ENCODE measurements at regions of chr15 and their contacts with region 1.

Region 1: GRCh38 chr15:91852741-91853510 is 582 bp upstream of the SLCO3A1 start:
- DNase-seq: peak; percentile 77
- H3K4me3 Mint-ChIP-seq: peak overlapping the region; percentile 83
- H3K27ac Mint-ChIP-seq: peak overlapping the region; percentile 87
- H3K4me1 Mint-ChIP-seq: peaks cover 59% of the 10 kb centered on the region
- H3K27me3 Mint-ChIP-seq: no peaks in the 10 kb centered on the region

Region 2: GRCh38 chr15:91867581-91868026 is 14.7 kb after region 1 on chr15:
- CTCF ChIA-PET with region 1: interaction called, 11 read pairs
- POLR2A ChIA-PET with region 1: interaction called, 47 read pairs
- DNase-seq: no peak
- H3K4me3 Mint-ChIP-seq: no peak overlapping the region
- H3K27ac Mint-ChIP-seq: no peak overlapping the region
- H3K4me1 Mint-ChIP-seq: peaks cover 75% of the 10 kb centered on the region
- H3K27me3 Mint-ChIP-seq: no peaks in the 10 kb centered on the region

Region 3: DNA sequence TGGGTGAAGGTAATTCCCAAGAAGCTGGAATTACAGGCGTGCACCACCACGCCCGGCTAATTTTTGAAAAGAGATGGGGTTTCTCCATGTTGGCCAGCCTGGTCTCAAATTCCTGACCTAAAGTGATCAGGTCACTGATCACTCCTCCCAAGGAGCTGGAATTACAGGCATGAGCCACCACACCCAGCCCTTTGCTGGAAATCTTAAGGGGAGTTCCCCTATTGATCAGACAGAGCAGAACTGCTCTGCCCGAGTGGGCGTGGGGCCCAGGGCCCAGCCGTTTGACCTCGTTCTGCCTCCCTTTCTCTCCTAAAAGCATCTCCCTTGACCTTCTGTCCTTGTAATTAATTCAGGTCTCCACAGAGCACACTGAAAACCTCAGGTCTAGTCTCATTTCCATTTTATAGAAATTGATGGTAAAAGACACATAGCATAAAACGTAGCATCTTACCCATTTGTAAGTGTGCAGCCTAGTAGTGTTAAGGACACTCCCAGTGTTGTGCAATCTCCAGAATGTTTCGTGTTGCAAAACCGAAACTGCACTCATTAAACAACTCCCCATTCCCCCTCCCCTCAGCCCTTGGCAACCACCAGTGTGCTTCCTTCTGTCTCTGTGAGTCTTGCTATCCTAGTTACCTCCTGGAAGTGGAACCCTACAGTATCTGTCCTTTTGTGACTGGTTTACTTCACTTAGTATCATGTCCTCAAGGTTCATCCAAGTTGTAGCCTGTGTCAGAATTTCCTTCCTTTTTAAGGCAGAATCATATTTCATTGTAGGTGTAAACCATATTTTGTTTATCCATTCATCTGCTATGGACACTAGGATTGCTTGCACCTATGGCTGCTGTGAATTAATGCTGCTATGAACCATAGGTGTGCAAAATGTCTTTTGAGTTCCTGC is 90.0 kb after region 1 on chr15:
- CTCF ChIA-PET with region 1: interaction called, 27 read pairs
- POLR2A ChIA-PET with region 1: interaction called, 3 read pairs
- DNase-seq: peak; percentile 63
- H3K4me3 Mint-ChIP-seq: peak overlapping the region; percentile 33
- H3K27ac Mint-ChIP-seq: no peak overlapping the region
- H3K4me1 Mint-ChIP-seq: peaks cover 42% of the 10 kb centered on the region
- H3K27me3 Mint-ChIP-seq: no peaks in the 10 kb centered on the region